AG04450 (cell line): ENCODE measurements at regions of chr1 and their contacts with region 1.

Region 1: DNA sequence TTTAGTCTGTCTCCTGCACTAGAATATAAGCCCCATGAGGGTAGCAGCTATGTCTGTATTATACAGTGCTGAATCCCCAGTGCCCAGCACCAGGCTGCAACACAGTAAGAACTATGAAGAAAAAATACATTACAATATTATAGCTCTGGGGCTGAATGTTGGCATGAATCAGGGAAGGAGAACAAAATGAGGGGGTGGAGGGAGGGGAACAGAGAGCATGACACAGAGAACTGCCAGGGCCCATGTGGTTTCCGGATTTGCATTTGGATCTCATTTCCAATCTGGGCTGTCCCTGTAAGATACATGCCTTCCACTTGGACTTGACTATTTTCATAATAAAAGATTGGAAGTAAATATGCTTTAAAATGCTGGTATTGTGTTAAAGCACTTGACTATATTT is 35.8 kb downstream of the C1orf198 start:
- DNase-seq: no peak
- H3K4me3 ChIP-seq: no peak overlapping the region
- H3K27ac ChIP-seq: no peak overlapping the region
- H3K27me3 ChIP-seq: no peaks in the 10 kb centered on the region
- CTCF ChIP-seq: no peak

Region 2: GRCh38 chr1:230807029-230807428 is 25.4 kb before region 1 on chr1:
- CTCF ChIA-PET with region 1: no interaction called
- POLR2A ChIA-PET with region 1: no interaction called
- DNase-seq: no peak
- H3K4me3 ChIP-seq: no peak overlapping the region
- H3K27ac ChIP-seq: no peak overlapping the region
- H3K27me3 ChIP-seq: peaks cover 2% of the 10 kb centered on the region
- CTCF ChIP-seq: no peak

Region 3: DNA sequence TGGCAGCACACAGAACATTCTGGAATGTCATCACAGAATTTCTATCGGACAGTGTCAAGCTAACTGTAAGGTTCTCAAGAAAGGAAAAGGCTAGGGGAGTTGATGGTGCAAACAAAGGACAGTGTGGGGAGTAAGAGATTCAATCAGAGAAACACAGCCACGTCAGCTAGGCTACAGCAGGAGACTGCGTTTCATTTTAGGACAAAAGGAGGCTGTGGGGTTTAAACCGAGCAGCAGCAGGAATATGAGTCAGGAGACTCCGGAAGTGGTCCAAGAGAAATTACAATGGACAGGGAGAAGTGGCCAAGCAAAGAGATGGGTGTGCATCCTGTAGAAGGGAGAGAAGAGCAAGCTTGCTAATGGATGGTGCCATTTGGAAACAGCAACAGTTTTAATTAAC is 73.3 kb after region 1 on chr1:
- CTCF ChIA-PET with region 1: no interaction called
- POLR2A ChIA-PET with region 1: interaction called, 12 read pairs
- DNase-seq: no peak
- H3K4me3 ChIP-seq: no peak overlapping the region
- H3K27ac ChIP-seq: no peak overlapping the region
- H3K27me3 ChIP-seq: no peaks in the 10 kb centered on the region
- CTCF ChIP-seq: no peak